CD4-positive, alpha-beta memory T cell (primary cell): ENCODE measurements at regions of chr5 and their contacts with region 1.

Region 1: GRCh38 chr5:139458580-139459406 is 3.8 kb downstream of the ECSCR start:
- DNase-seq: peak; percentile 83 to 94 (median 86)
- H3K4me3 ChIP-seq: peak overlapping the region in 1 of 2 donors; percentile 20
- H3K4me3 Mint-ChIP-seq: peak overlapping the region in 7 of 8 donors; percentile 64 to 89 (median 76)
- H3K27ac ChIP-seq: peak overlapping the region; percentile 68
- H3K27ac Mint-ChIP-seq: peak overlapping the region; percentile 91 to 98 (median 96)
- H3K4me1 ChIP-seq: peaks cover 60% of the 10 kb centered on the region
- H3K4me1 Mint-ChIP-seq: peaks cover 39 to 68% (median 53%) of the 10 kb centered on the region in 4 donors
- H3K27me3 ChIP-seq: no peaks in the 10 kb centered on the region
- H3K27me3 Mint-ChIP-seq: no peaks in the 10 kb centered on the region

Region 2: DNA sequence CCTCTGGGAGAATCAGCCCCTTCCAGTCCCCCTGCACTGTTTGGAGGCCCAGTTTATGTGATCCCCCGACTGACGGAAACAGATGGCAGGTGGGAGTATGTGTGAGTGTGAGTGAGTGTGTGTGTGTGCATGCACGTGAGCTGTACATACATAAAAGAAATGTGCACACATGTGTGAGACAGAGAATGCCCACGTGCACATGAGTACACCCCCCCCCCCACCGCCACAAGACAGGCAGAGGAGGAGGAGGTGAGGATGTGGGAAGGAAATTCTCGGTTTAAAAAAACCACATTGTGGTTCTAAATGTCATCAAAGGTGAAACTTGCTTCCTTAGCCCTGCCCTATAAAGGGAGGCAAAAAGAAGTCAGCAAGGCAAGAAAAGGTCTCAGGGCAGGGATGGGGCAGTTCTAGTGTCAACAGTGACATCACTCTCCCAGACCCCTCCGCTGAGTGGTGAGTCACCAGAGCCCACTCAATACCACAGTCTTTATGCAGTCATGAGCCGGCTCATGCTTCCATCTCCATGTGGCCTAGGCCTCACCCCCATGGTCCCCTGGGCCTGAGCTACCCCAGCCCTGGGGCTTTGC is 804.4 kb before region 1 on chr5:
- CTCF ChIA-PET with region 1: no interaction called
- POLR2A ChIA-PET with region 1: no interaction called
- intact Hi-C with region 1: no loop called
- DNase-seq: peak; percentile 80 to 87 (median 81)
- H3K4me3 ChIP-seq: no peak overlapping the region
- H3K4me3 Mint-ChIP-seq: peak overlapping the region in 6 of 8 donors; percentile 9 to 78 (median 52)
- H3K27ac ChIP-seq: no peak overlapping the region
- H3K27ac Mint-ChIP-seq: peak overlapping the region; percentile 19 to 93 (median 48)
- H3K4me1 ChIP-seq: peaks cover 26% of the 10 kb centered on the region
- H3K4me1 Mint-ChIP-seq: peaks cover 17 to 35% (median 24%) of the 10 kb centered on the region in 4 donors
- H3K27me3 ChIP-seq: peaks cover 79% of the 10 kb centered on the region
- H3K27me3 Mint-ChIP-seq: peaks cover 63 to 75% of the 10 kb centered on the region in 2 donors

Region 3: DNA sequence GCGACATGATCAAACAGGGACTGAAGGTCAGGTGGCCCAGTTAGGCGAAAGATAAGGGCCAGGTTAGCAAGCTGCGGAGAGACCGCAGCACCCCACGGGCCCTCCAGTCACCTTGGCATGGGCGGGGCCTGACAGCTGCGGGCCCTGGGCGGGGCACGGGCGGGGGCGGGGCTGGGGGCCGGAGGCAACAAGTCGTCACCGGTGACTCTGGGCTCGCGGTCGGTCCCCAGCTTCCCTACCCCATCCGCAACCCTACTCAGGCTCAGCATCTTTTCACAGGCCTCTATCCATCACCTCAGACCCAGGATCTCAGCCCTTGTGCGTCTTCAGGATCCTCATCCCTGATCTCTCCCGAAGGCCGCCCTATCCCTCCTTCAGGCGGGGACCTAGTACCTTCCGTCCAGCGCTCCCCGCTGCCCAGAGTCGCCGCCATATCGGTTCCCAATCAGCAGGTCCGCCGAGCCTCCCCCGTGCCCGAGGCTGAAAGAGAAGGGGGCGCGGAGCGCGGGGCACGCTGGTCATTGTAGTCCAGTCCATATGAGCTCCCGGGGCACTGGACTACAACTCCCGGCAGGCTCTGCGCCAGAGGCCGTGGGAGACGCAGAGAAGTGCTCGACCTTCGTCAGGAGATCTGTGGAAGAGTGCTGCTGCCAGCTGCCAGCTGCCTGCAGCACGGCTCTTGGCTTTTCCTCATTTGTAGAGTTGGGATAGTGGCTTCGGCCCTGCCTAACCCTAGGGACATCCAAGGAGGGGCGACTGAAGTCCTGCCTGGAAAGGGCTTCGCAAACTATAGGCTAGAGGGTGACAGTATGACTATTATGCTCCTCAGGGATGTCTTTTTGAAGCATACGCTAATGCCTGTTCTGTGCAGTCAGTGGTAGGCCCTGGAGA is 19.5 kb before region 1 on chr5 and contains the start of gene DNAJC18:
- CTCF ChIA-PET with region 1: interaction called, 6 read pairs
- POLR2A ChIA-PET with region 1: interaction called, 171 read pairs
- intact Hi-C with region 1: loop called (anchors 1 kb)
- DNase-seq: peak; percentile 84 to 90 (median 86)
- H3K4me3 ChIP-seq: peak within 1 kb of the TSS; percentile 83 to 91
- H3K4me3 Mint-ChIP-seq: peak within 1 kb of the TSS; percentile 96 to 99 (median 98)
- H3K27ac ChIP-seq: peak within 1 kb of the TSS; percentile 99
- H3K27ac Mint-ChIP-seq: peak within 1 kb of the TSS; percentile 93 to 100 (median 100)
- H3K4me1 ChIP-seq: peaks cover 31% of the 10 kb centered on the region
- H3K4me1 Mint-ChIP-seq: peaks cover 32 to 63% (median 41%) of the 10 kb centered on the region in 4 donors
- H3K27me3 ChIP-seq: no peaks in the 10 kb centered on the region
- H3K27me3 Mint-ChIP-seq: no peaks in the 10 kb centered on the region
- total RNA-seq, gene DNAJC18: 6.2 to 7.3 TPM

Region 4: GRCh38 chr5:139474890-139475791 is 16.3 kb after region 1 on chr5:
- CTCF ChIA-PET with region 1: interaction called, 6 read pairs
- POLR2A ChIA-PET with region 1: interaction called, 82 read pairs
- intact Hi-C with region 1: loop called (anchors 1 kb)
- DNase-seq: peak in 3 of 5 donors; percentile 32 to 57 (median 45)
- H3K4me3 ChIP-seq: no peak overlapping the region
- H3K4me3 Mint-ChIP-seq: peak overlapping the region; percentile 50 to 87 (median 76)
- H3K27ac ChIP-seq: peak overlapping the region; percentile 23
- H3K27ac Mint-ChIP-seq: peak overlapping the region; percentile 77 to 95 (median 93)
- H3K4me1 ChIP-seq: peaks cover 94% of the 10 kb centered on the region
- H3K4me1 Mint-ChIP-seq: peaks cover 53 to 94% (median 75%) of the 10 kb centered on the region in 4 donors
- H3K27me3 ChIP-seq: no peaks in the 10 kb centered on the region
- H3K27me3 Mint-ChIP-seq: no peaks in the 10 kb centered on the region

Region 5: DNA sequence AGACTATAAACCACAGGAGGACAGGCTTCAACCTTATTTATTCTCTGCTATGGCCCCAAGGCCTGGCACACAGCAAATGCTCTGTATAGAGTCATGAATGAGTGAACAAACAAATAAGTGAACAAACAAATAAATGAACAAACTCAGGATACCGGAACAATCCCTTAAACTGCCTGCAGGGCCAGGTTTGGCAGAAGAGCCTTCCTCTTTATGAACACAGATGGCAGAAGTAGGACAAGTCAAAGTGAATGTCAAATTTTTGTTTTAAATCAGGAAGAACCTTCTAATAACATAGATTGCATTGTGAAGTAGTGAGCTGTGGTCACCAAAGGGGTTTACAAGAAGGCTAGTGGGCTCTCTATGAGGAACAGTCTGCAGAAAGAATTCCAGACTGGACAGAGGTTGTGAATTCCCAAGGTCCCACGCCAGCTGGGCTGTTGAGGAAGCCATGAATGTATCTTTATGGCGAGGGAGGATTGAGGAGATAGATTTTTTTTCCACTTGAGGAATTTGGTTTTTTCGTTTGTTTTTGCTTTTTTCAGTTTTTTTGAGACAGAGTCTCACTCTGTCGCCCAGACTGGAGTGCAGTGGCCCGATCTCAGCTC is 54.1 kb after region 1 on chr5:
- CTCF ChIA-PET with region 1: interaction called, 32 read pairs
- POLR2A ChIA-PET with region 1: interaction called, 10 read pairs
- intact Hi-C with region 1: loop called (anchors 1 kb)
- DNase-seq: no peak
- H3K4me3 ChIP-seq: no peak overlapping the region
- H3K4me3 Mint-ChIP-seq: peak overlapping the region in 5 of 8 donors; percentile 26 to 60 (median 55)
- H3K27ac ChIP-seq: no peak overlapping the region
- H3K27ac Mint-ChIP-seq: peak overlapping the region in 6 of 7 donors; percentile 32 to 86 (median 60)
- H3K4me1 ChIP-seq: peaks cover 34% of the 10 kb centered on the region
- H3K4me1 Mint-ChIP-seq: peaks cover 32 to 50% (median 42%) of the 10 kb centered on the region in 4 donors
- H3K27me3 ChIP-seq: no peaks in the 10 kb centered on the region
- H3K27me3 Mint-ChIP-seq: no peaks in the 10 kb centered on the region